ENCODE measurements at regions of chr22 and their contacts with region 1.

Region 1: DNA sequence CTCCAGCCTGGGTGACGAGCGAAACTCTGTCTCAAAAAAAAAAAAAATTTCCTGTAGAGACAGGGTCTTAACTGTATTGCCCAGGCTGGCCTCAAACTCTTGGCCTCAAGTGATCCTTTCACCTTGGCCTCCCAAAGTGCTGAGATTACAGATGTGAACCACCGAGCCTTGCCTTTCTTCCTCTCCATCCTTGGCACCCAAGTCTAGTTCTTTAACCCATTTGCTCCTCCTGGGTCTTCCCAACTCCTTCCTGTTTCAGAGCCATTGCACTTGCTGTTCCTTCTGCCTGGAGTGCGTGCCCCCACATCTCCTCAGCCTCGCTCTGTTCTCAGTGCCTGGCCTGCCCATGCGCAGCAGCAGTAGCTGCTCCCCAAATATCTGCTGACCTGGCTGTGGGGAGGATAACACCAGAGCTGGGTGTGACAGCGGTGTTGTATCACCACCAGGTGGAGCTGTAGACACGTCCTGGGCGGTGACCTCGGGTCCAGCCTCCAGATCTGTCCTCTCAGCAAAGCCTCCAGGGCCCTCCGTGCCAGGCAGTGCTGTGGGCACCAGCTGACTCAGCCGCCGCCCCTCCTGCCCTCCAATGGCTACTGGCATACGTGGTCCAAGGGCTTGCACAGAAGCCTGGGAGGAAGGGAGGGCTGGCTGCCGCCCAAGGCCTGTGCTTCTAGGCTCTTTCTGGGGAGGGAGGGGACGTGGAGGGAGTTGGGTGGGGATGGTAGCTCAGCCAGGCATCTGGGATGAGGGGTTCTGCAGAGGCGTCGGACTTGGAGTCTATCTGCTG is 22.0 kb downstream of the TEF start:
- DNase-seq: peak; percentile 90
- H3K4me3 Mint-ChIP-seq: no peak overlapping the region
- H3K27ac Mint-ChIP-seq: no peak overlapping the region
- H3K4me1 Mint-ChIP-seq: peaks cover 10% of the 10 kb centered on the region
- H3K27me3 Mint-ChIP-seq: no peaks in the 10 kb centered on the region

Region 2: GRCh38 chr22:41030891-41031290 is 372.8 kb before region 1 on chr22:
- CTCF ChIA-PET with region 1: no interaction called
- POLR2A ChIA-PET with region 1: no interaction called
- DNase-seq: no peak
- H3K4me3 Mint-ChIP-seq: no peak overlapping the region
- H3K27ac Mint-ChIP-seq: no peak overlapping the region
- H3K4me1 Mint-ChIP-seq: peaks cover 2% of the 10 kb centered on the region
- H3K27me3 Mint-ChIP-seq: peaks cover 3% of the 10 kb centered on the region

Region 3: GRCh38 chr22:41247703-41248102 is 156.0 kb before region 1 on chr22:
- CTCF ChIA-PET with region 1: no interaction called
- POLR2A ChIA-PET with region 1: no interaction called
- DNase-seq: no peak
- H3K4me3 Mint-ChIP-seq: no peak overlapping the region
- H3K27ac Mint-ChIP-seq: no peak overlapping the region
- H3K4me1 Mint-ChIP-seq: no peaks in the 10 kb centered on the region
- H3K27me3 Mint-ChIP-seq: no peaks in the 10 kb centered on the region

Region 4: DNA sequence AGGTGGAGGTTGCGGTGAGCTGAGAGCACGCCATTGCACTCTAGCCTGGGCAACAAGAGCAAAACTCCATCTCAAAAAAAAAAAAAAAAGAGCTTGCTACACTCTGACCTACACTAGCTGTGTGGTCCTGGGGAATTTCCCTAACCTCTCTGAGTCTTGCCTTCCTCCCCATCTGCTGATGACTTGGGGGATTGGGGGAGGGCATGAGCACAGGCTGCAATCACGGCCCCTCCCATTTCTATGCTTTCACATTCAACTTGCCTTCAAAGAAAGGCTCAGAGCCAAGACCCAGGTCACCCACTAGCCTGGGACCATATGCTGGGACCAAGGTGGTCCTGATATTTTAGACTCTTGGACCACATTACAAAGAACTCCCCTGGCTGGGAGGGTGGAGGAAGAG is 61.7 kb before region 1 on chr22:
- CTCF ChIA-PET with region 1: no interaction called
- POLR2A ChIA-PET with region 1: no interaction called
- DNase-seq: peak; percentile 22
- H3K4me3 Mint-ChIP-seq: no peak overlapping the region
- H3K27ac Mint-ChIP-seq: peak overlapping the region; percentile 31
- H3K4me1 Mint-ChIP-seq: peaks cover 7% of the 10 kb centered on the region
- H3K27me3 Mint-ChIP-seq: no peaks in the 10 kb centered on the region

Region 5: GRCh38 chr22:41381329-41382097 is 22.2 kb before region 1 on chr22 and contains the start of gene TEF:
- CTCF ChIA-PET with region 1: interaction called, 11 read pairs
- POLR2A ChIA-PET with region 1: interaction called, 4 read pairs
- DNase-seq: peak; percentile 98
- H3K4me3 Mint-ChIP-seq: peak within 1 kb of the TSS; percentile 88
- H3K27ac Mint-ChIP-seq: peak within 1 kb of the TSS; percentile 89
- H3K4me1 Mint-ChIP-seq: peaks cover 15% of the 10 kb centered on the region
- H3K27me3 Mint-ChIP-seq: peaks cover under 1% of the 10 kb centered on the region
- total RNA-seq, gene TEF: 2.3 to 3.3 TPM

Region 6: GRCh38 chr22:41501209-41501608 is 97.5 kb after region 1 on chr22:
- CTCF ChIA-PET with region 1: interaction called, 42 read pairs
- POLR2A ChIA-PET with region 1: no interaction called
- DNase-seq: peak; percentile 27
- H3K4me3 Mint-ChIP-seq: no peak overlapping the region
- H3K27ac Mint-ChIP-seq: no peak overlapping the region
- H3K4me1 Mint-ChIP-seq: no peaks in the 10 kb centered on the region
- H3K27me3 Mint-ChIP-seq: no peaks in the 10 kb centered on the region

Region 7: GRCh38 chr22:41517172-41518047 is 113.7 kb after region 1 on chr22:
- CTCF ChIA-PET with region 1: interaction called, 42 read pairs
- POLR2A ChIA-PET with region 1: interaction called, 14 read pairs
- DNase-seq: peak; percentile 35
- H3K4me3 Mint-ChIP-seq: no peak overlapping the region
- H3K27ac Mint-ChIP-seq: no peak overlapping the region
- H3K4me1 Mint-ChIP-seq: no peaks in the 10 kb centered on the region
- H3K27me3 Mint-ChIP-seq: no peaks in the 10 kb centered on the region

Region 8: GRCh38 chr22:41532908-41533825 is 129.4 kb after region 1 on chr22:
- CTCF ChIA-PET with region 1: interaction called, 78 read pairs
- POLR2A ChIA-PET with region 1: interaction called, 3 read pairs
- DNase-seq: peak; percentile 79
- H3K4me3 Mint-ChIP-seq: no peak overlapping the region
- H3K27ac Mint-ChIP-seq: peak overlapping the region; percentile 21
- H3K4me1 Mint-ChIP-seq: no peaks in the 10 kb centered on the region
- H3K27me3 Mint-ChIP-seq: no peaks in the 10 kb centered on the region